Caco-2 (cell line): ENCODE measurements at regions of chr4 and their contacts with region 1.

Region 1: GRCh38 chr4:110915301-110915700 is 292.4 kb upstream of the PITX2 start:
- DNase-seq: no peak
- H3K4me3 ChIP-seq: no peak overlapping the region
- H3K4me3 Mint-ChIP-seq: no peak overlapping the region
- H3K27ac Mint-ChIP-seq: no peak overlapping the region
- H3K4me1 ChIP-seq: peaks cover 17% of the 10 kb centered on the region
- H3K4me1 Mint-ChIP-seq: peaks cover 5% of the 10 kb centered on the region
- H3K27me3 ChIP-seq: no peaks in the 10 kb centered on the region
- H3K27me3 Mint-ChIP-seq: no peaks in the 10 kb centered on the region
- CTCF ChIP-seq: no peak

Region 2: DNA sequence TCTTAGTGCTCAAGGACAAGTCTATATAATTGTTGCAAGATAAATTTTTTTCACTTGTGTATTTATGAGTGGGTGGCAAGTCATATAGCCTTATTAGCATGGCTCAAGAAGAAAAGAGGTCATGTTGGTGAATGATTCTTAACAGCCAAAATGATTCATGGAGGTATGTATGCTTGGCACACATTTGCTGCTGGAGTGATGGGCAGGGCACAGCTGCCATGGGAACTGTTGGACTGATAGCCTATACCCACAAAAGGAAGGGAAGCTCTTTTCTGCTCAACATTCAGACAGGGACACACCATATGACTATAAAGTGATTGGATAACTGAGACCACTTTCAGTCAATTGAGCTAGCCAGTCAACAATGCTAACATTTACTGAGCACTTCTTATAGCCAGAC is 245.6 kb before region 1 on chr4:
- CTCF ChIA-PET with region 1: no interaction called
- POLR2A ChIA-PET with region 1: no interaction called
- intact Hi-C with region 1: no loop called
- DNase-seq: no peak
- H3K4me3 ChIP-seq: no peak overlapping the region
- H3K4me3 Mint-ChIP-seq: no peak overlapping the region
- H3K27ac Mint-ChIP-seq: no peak overlapping the region
- H3K4me1 ChIP-seq: 0 out of 2 replicates have a peak, but pooled peaks cover 14% of the 10 kb centered on the region
- H3K4me1 Mint-ChIP-seq: peaks cover 8% of the 10 kb centered on the region
- H3K27me3 ChIP-seq: no peaks in the 10 kb centered on the region
- H3K27me3 Mint-ChIP-seq: no peaks in the 10 kb centered on the region
- CTCF ChIP-seq: no peak

Region 3: GRCh38 chr4:110865611-110866259 is 49.6 kb before region 1 on chr4:
- CTCF ChIA-PET with region 1: no interaction called
- POLR2A ChIA-PET with region 1: no interaction called
- intact Hi-C with region 1: no loop called
- DNase-seq: no peak
- H3K4me3 ChIP-seq: no peak overlapping the region
- H3K4me3 Mint-ChIP-seq: no peak overlapping the region
- H3K27ac Mint-ChIP-seq: no peak overlapping the region
- H3K4me1 ChIP-seq: no peaks in the 10 kb centered on the region
- H3K4me1 Mint-ChIP-seq: peaks cover 10% of the 10 kb centered on the region
- H3K27me3 ChIP-seq: no peaks in the 10 kb centered on the region
- H3K27me3 Mint-ChIP-seq: no peaks in the 10 kb centered on the region
- CTCF ChIP-seq: no peak

Region 4: GRCh38 chr4:110904435-110905065 is 10.8 kb before region 1 on chr4:
- CTCF ChIA-PET with region 1: no interaction called
- POLR2A ChIA-PET with region 1: no interaction called
- intact Hi-C with region 1: loop called (anchors 2 kb)
- DNase-seq: no peak
- H3K4me3 ChIP-seq: no peak overlapping the region
- H3K4me3 Mint-ChIP-seq: no peak overlapping the region
- H3K27ac Mint-ChIP-seq: no peak overlapping the region
- H3K4me1 ChIP-seq: peaks cover 44% of the 10 kb centered on the region
- H3K4me1 Mint-ChIP-seq: peaks cover 19% of the 10 kb centered on the region
- H3K27me3 ChIP-seq: no peaks in the 10 kb centered on the region
- H3K27me3 Mint-ChIP-seq: no peaks in the 10 kb centered on the region
- CTCF ChIP-seq: no peak

Region 5: DNA sequence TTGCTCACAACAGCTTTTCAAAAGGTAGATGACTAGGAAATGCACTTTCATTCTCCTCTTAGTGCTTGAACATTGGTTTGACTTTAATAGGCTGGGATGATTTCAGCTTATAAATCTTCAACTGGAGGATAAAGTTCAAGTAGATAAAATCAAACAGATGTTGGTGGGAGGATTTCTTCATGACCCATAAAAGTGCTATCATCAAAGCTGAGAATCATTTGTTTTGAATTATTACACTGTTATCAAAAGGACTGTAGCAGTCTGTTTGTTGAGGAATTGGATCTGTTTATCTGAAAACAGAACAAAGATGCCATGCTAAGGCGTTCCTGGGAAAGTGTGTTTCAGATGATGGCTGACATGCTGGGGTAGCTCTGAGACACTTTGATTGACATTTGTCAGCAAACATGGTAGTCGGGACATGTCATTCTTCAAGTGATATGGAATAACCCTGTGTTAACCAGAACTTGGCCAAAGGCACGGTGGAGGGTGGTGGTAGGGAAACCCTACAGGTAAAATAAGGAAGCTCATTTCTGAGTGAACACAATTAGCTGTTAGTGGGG is 11.6 kb after region 1 on chr4:
- CTCF ChIA-PET with region 1: no interaction called
- POLR2A ChIA-PET with region 1: interaction called, 4 read pairs
- intact Hi-C with region 1: loop called (anchors 1 kb)
- DNase-seq: peak; percentile 75 to 79
- H3K4me3 ChIP-seq: no peak overlapping the region
- H3K4me3 Mint-ChIP-seq: peak overlapping the region; percentile 39
- H3K27ac Mint-ChIP-seq: peak overlapping the region; percentile 23
- H3K4me1 ChIP-seq: peaks cover 42% of the 10 kb centered on the region
- H3K4me1 Mint-ChIP-seq: peaks cover 31% of the 10 kb centered on the region
- H3K27me3 ChIP-seq: no peaks in the 10 kb centered on the region
- H3K27me3 Mint-ChIP-seq: no peaks in the 10 kb centered on the region
- CTCF ChIP-seq: no peak

Region 6: GRCh38 chr4:110953191-110953590 is 37.9 kb after region 1 on chr4:
- CTCF ChIA-PET with region 1: no interaction called
- POLR2A ChIA-PET with region 1: no interaction called
- intact Hi-C with region 1: loop called (anchors 5 kb)
- DNase-seq: no peak
- H3K4me3 ChIP-seq: no peak overlapping the region
- H3K4me3 Mint-ChIP-seq: peak overlapping the region; percentile 12
- H3K27ac Mint-ChIP-seq: peak overlapping the region; percentile 45
- H3K4me1 ChIP-seq: peaks cover 47% of the 10 kb centered on the region
- H3K4me1 Mint-ChIP-seq: peaks cover 23% of the 10 kb centered on the region
- H3K27me3 ChIP-seq: no peaks in the 10 kb centered on the region
- H3K27me3 Mint-ChIP-seq: no peaks in the 10 kb centered on the region
- CTCF ChIP-seq: no peak